Left lung (tissue), 14 donors: ENCODE measurements at regions of chr5 and their contacts with region 1.

Region 1: DNA sequence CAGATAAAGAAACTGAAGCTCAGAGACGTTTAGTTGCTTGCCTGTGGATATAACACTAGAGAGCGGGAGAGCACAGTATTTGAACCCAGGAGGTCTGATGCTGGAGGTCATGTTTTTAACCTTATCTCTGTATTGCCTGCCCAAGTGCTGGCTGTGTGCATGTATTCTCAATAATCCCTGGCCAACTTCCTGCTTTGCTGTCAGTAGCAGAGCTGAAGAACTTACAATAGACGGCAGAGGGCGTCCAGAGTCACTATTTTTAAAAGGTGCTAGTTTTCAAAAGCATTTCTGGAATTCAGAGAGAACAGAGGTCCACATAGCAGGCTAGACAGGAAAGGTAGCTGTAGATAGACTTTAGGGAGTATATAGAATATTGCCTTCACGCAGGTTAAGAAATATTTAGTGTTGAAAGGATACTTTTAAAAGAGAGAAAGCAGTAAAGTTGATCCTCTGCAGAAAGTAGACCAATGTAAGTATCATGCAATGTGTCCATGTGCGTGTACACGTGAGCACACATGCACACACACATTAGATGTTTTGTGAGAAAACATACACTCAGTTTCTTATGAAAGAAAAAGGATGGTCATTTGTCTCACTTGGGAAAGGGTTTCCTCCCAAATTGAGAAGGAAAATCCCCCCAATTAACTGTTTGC is 46.3 kb downstream of the PTCD2 start:
- DNase-seq: peak in 3 of 4 donors; percentile 45 to 83 (median 70)
- ATAC-seq: peak; percentile 96
- H3K4me3 ChIP-seq: no peak overlapping the region
- H3K27ac ChIP-seq: no peak overlapping the region
- H3K4me1 ChIP-seq: peaks cover 0 to 26% of the 10 kb centered on the region in 2 donors
- H3K27me3 ChIP-seq: no peaks in the 10 kb centered on the region
- CTCF ChIP-seq: peak; percentile 59 to 81

Region 2: GRCh38 chr5:72018146-72018803 is 348.2 kb before region 1 on chr5:
- intact Hi-C with region 1: no loop called
- DNase-seq: no peak
- ATAC-seq: peak; percentile 82
- H3K4me3 ChIP-seq: no peak overlapping the region
- H3K27ac ChIP-seq: no peak overlapping the region
- H3K4me1 ChIP-seq: peaks cover 0 to 4% of the 10 kb centered on the region in 2 donors
- H3K27me3 ChIP-seq: peaks cover 0 to 4% of the 10 kb centered on the region in 2 donors
- CTCF ChIP-seq: peak; percentile 93 to 95

Region 3: DNA sequence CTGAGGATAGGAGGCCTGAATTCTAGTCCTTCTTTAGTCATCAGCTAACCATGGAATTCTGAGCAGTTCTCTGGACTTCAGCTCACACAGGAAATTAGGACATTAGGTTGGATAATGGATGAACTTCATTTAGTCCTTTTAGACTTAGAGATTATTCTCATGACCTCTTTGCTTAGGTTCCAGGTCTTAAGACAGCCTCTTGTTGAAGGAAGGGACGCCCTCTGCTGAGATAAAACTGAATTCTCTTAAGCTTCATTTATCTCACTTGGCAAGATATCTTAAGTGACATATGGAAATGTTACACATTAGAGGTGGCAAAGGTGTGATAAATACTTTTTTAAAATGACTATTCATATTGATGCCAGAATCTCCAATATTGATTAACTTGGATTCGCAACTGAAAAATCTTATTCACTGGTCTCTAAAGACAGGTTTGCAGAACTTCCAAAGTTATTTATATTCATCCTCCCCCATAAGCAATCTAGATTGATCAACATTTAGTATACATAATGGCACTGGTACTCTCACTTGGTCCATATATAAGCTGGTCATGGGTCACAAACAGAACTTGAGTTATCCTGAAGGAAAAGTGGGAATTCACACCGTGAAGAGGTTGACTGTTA is 157.6 kb after region 1 on chr5:
- intact Hi-C with region 1: loop called in 1 of 2 experiments (anchors 5 kb)
- DNase-seq: peak in 1 of 4 donors; percentile 58
- ATAC-seq: peak; percentile 90
- H3K4me3 ChIP-seq: no peak overlapping the region
- H3K27ac ChIP-seq: no peak overlapping the region
- H3K4me1 ChIP-seq: peaks cover 0 to 4% of the 10 kb centered on the region in 2 donors
- H3K27me3 ChIP-seq: no peaks in the 10 kb centered on the region
- CTCF ChIP-seq: peak; percentile 46 to 50

Region 4: DNA sequence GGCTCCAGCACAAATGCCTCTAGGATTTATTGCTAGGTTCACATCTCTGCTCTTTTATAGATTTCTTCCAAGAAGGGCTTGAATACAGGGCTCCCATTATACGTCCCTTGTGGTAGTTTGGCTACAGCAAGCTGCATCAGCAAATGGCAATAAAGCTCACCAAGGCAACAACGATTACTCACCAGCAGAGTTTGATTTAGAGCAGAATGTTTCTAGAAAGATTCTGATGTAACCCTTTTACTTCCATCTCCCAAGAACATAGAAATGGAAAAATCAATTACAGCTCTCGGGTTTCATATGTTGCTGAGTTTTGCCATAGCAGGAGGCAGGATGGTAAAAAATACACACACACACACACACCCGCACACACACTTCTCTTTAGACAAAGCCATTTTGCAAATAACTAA is 325.8 kb after region 1 on chr5:
- intact Hi-C with region 1: no loop called
- DNase-seq: no peak
- ATAC-seq: no peak
- H3K4me3 ChIP-seq: no peak overlapping the region
- H3K27ac ChIP-seq: no peak overlapping the region
- H3K4me1 ChIP-seq: no peaks in the 10 kb centered on the region
- H3K27me3 ChIP-seq: no peaks in the 10 kb centered on the region
- CTCF ChIP-seq: no peak